ENCODE measurements at regions of chr6 and their contacts with region 1.

Region 1: GRCh38 chr6:2531426-2532215 is 219.1 kb downstream of the MYLK4 start:
- DNase-seq: no peak
- H3K4me3 Mint-ChIP-seq: no peak overlapping the region
- H3K27ac Mint-ChIP-seq: no peak overlapping the region
- H3K4me1 Mint-ChIP-seq: peaks cover 17% of the 10 kb centered on the region
- H3K27me3 Mint-ChIP-seq: peaks cover 84% of the 10 kb centered on the region

Region 2: GRCh38 chr6:2478200-2478599 is 53.4 kb before region 1 on chr6:
- CTCF ChIA-PET with region 1: no interaction called
- POLR2A ChIA-PET with region 1: no interaction called
- DNase-seq: no peak
- H3K4me3 Mint-ChIP-seq: no peak overlapping the region
- H3K27ac Mint-ChIP-seq: no peak overlapping the region
- H3K4me1 Mint-ChIP-seq: no peaks in the 10 kb centered on the region
- H3K27me3 Mint-ChIP-seq: peaks cover 12% of the 10 kb centered on the region

Region 3: GRCh38 chr6:2542858-2543218 is 11.2 kb after region 1 on chr6:
- CTCF ChIA-PET with region 1: interaction called, 12 read pairs
- POLR2A ChIA-PET with region 1: interaction called, 16 read pairs
- DNase-seq: peak; percentile 80
- H3K4me3 Mint-ChIP-seq: peak overlapping the region; percentile 28
- H3K27ac Mint-ChIP-seq: peak overlapping the region; percentile 74
- H3K4me1 Mint-ChIP-seq: peaks cover 32% of the 10 kb centered on the region
- H3K27me3 Mint-ChIP-seq: peaks cover 75% of the 10 kb centered on the region

Region 4: DNA sequence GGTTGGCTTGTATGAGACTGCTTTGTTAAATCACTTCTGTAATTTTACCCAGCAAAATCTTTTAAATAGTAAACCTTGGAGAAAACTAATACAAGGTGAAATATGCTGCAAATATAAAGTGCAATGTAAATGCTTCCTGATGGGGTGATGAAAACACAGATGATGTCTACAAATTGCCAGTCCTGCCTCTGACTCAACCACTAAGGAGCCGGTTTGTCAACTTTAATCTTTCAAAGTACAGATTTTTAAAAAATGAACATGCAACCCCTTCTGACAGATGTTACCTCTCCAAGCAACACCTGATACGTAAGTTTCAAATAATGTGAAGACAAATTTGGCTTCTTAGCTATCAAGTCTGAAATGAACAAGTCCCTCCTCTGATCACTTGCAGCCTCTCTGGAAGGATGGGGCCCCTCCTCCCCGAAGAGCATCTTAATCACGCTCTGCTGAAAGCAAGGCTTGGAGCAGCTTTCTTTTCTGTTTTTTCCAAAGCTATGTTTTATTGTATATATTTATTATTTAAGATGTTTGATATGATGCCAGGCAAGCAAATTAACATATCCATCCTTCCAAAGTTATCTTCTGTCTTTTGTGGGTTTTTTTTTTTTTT is 23.1 kb after region 1 on chr6:
- CTCF ChIA-PET with region 1: interaction called, 11 read pairs
- POLR2A ChIA-PET with region 1: no interaction called
- DNase-seq: no peak
- H3K4me3 Mint-ChIP-seq: no peak overlapping the region
- H3K27ac Mint-ChIP-seq: no peak overlapping the region
- H3K4me1 Mint-ChIP-seq: no peaks in the 10 kb centered on the region
- H3K27me3 Mint-ChIP-seq: peaks cover 70% of the 10 kb centered on the region